Activated CD8-positive, alpha-beta T cell treated with anti-CD3 and anti-CD28 coated beads, Interleukin-2, amount 10 ng/mL, durations not matched to agents 7 days and 5 days (primary cell): ENCODE measurements at regions of chr11 and their contacts with region 1.

Region 1: GRCh38 chr11:33857933-33858371 is 33.9 kb downstream of the LMO2 start:
- DNase-seq: peak; percentile 82
- ATAC-seq: peak; percentile 82
- H3K4me3 Mint-ChIP-seq: no peak overlapping the region
- H3K27ac Mint-ChIP-seq: no peak overlapping the region
- H3K4me1 Mint-ChIP-seq: no peaks in the 10 kb centered on the region
- H3K27me3 Mint-ChIP-seq: peaks cover 56% of the 10 kb centered on the region

Region 2: DNA sequence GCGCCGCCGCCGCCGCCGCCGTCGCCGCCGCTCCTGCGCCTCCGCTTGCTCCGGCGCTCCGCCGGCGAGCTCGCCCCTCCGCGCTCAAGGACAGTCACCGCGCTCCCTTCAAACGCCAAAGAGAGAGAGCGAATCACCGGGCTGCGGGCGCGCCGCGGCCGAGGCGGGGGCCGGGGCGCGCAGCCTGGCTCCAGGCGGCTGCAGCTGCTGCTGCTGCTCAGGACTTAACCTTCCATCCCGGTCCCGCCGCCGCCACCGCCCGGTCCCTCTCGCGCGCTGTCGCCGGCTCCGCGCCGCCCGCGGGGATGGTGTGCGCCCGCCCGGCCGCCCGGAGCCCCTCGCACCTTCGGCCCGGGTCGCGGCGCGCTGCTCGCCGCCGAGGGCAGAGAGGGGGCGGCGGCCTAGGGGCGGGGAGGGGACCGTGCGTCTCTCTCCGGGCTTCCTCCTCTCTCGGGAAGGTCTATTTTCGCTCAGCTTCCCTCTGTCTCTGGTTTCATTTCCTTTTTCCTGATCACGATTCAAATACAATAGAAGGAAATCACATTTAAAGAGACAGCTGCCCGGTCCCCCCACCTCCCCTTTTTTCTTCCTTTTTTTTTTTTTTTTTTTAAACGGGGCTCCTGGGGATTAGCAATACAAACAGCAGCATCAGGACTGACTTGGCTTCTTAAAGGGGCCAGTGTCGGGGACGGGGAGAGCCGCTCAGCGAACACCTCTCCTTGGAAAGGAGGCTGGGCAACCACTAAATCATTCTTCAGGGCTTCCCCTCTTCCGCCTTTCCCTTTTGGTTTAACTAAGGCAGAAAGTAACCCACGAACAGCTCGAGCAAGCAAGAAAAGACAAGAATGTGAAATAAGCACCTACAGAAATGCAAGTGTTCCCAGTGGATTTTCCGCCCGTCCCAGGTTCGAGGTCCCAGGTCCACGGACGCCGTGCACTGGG is 11.8 kb after region 1 on chr11:
- CTCF ChIA-PET with region 1: interaction called, 14 read pairs
- POLR2A ChIA-PET with region 1: no interaction called
- DNase-seq: no peak
- ATAC-seq: peak; percentile 60
- H3K4me3 Mint-ChIP-seq: peak overlapping the region; percentile 75
- H3K27ac Mint-ChIP-seq: no peak overlapping the region
- H3K4me1 Mint-ChIP-seq: peaks cover 15% of the 10 kb centered on the region
- H3K27me3 Mint-ChIP-seq: peaks cover 65% of the 10 kb centered on the region

Region 3: DNA sequence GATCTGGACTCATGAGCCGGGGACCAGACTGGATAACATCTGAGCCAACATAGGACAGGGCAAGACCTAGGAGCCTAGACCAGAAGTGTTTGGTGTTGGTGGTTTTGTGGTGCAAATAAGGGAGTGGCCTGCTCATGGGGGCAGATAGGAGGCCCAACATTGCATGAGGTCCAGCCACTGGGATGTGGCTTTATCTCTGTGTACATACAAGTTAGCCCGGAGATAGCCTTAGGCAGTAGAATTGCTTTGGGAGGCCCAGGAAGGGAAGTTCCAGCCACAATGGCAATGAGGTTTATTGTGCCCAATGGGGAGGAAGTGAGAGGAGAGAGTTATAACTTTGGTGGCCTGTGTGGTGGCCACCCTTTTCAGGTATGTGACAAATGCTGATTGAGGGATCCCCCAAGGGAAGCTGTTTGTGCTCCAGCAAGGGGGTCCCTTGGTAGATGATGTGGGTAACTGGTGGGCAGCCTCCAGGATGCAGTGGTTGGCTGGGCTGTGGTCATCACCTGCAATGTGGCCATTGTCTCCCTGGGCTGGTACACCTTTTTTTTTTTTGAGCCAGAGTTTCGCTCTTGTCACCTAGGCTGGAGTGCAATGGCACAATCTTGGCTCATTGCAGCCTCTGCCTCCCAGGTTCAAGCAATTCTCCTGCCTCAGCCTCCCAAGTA is 27.5 kb after region 1 on chr11:
- CTCF ChIA-PET with region 1: no interaction called
- POLR2A ChIA-PET with region 1: no interaction called
- DNase-seq: no peak
- ATAC-seq: no peak
- H3K4me3 Mint-ChIP-seq: no peak overlapping the region
- H3K27ac Mint-ChIP-seq: no peak overlapping the region
- H3K4me1 Mint-ChIP-seq: peaks cover 4% of the 10 kb centered on the region
- H3K27me3 Mint-ChIP-seq: peaks cover 82% of the 10 kb centered on the region

Region 4: GRCh38 chr11:33970984-33971466 is 113.1 kb after region 1 on chr11:
- CTCF ChIA-PET with region 1: interaction called, 16 read pairs
- POLR2A ChIA-PET with region 1: no interaction called
- DNase-seq: peak; percentile 25
- ATAC-seq: no peak
- H3K4me3 Mint-ChIP-seq: no peak overlapping the region
- H3K27ac Mint-ChIP-seq: no peak overlapping the region
- H3K4me1 Mint-ChIP-seq: no peaks in the 10 kb centered on the region
- H3K27me3 Mint-ChIP-seq: peaks cover 17% of the 10 kb centered on the region

Region 5: DNA sequence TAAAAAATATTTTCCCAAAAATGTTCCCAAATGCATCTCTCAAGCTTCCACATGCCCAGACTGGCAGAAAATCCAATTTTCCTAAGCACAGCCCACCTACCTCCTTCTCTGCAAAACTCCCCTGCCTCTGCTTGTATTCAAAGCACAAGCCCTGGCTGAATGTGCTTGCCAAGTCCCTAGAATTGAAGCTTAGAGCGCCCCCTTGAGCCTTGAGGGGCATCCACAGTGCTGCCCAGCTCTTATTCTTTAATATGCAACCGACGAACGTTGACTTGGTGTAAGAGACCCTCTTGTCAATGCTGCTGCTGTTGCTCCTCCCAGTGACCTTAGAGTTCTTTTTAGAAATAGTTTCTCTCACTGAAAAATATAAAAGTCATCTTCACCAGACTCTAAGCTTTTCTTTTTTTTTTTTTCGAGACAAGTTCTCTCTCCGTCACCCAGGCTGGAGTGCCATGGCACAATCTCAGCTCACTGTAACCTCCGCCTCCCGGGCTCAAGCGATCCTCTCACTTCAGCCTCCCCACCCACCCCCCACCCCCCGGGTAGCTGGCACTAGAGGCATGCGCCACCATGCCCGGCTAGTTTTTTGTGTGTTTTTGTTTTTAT is 130.1 kb after region 1 on chr11:
- CTCF ChIA-PET with region 1: interaction called, 45 read pairs
- POLR2A ChIA-PET with region 1: no interaction called
- DNase-seq: peak; percentile 87
- ATAC-seq: peak; percentile 90
- H3K4me3 Mint-ChIP-seq: no peak overlapping the region
- H3K27ac Mint-ChIP-seq: no peak overlapping the region
- H3K4me1 Mint-ChIP-seq: peaks cover 13% of the 10 kb centered on the region
- H3K27me3 Mint-ChIP-seq: peaks cover 3% of the 10 kb centered on the region

Region 6: GRCh38 chr11:34044664-34045485 is 186.9 kb after region 1 on chr11:
- CTCF ChIA-PET with region 1: no interaction called
- POLR2A ChIA-PET with region 1: no interaction called
- DNase-seq: no peak
- ATAC-seq: no peak
- H3K4me3 Mint-ChIP-seq: no peak overlapping the region
- H3K27ac Mint-ChIP-seq: no peak overlapping the region
- H3K4me1 Mint-ChIP-seq: peaks cover 6% of the 10 kb centered on the region
- H3K27me3 Mint-ChIP-seq: peaks cover 10% of the 10 kb centered on the region